OCI-LY7 (cell line): ENCODE measurements at regions of chr5 and their contacts with region 1.

Region 1: DNA sequence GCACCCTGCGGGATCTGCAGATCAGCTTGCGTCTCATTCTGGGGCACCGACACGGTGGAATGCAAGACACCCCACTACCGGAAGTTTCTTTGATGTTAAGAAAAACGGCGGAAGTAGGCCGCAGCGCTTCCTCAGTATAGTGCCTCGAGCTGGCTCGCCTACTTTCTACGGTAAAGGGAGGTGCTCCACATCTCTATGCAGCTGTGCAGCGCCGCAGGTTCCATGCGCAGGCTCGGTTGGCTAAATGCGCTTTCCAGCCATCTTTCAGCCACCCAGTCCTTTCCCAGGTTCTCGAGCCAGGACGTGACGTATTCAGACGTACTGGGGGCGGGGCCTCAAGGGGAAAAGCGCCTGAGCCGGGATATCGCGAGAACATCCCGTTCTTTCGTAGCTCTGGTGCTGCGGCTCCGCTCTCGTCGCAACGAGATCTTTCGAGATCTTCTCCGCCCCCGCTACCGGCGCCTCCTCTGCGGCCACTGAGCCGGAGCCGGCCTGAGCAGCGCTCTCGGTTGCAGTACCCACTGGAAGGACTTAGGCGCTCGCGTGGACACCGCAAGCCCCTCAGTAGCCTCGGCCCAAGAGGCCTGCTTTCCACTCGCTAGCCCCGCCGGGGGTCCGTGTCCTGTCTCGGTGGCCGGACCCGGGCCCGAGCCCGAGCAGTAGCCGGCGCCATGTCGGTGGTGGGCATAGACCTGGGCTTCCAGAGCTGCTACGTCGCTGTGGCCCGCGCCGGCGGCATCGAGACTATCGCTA is at the start of gene HSPA4:
- DNase-seq: peak; percentile 100
- H3K4me3 ChIP-seq: peak within 1 kb of the TSS; percentile 99
- H3K27ac ChIP-seq: peak within 1 kb of the TSS; percentile 97
- H3K4me1 ChIP-seq: peaks cover 38% of the 10 kb centered on the region
- CTCF ChIP-seq: no peak
- total RNA-seq, gene HSPA4: 65.4 and 86.6 TPM in 2 replicates

Region 2: GRCh38 chr5:133025804-133026663 is 25.7 kb before region 1 on chr5 and contains the start of gene ZCCHC10:
- CTCF ChIA-PET with region 1: interaction called, 3 read pairs
- POLR2A ChIA-PET with region 1: interaction called, 70 read pairs
- intact Hi-C with region 1: no loop called
- DNase-seq: peak; percentile 96
- H3K4me3 ChIP-seq: peak within 1 kb of the TSS; percentile 79
- H3K27ac ChIP-seq: peak within 1 kb of the TSS; percentile 69
- H3K4me1 ChIP-seq: peaks cover 36% of the 10 kb centered on the region
- CTCF ChIP-seq: no peak
- total RNA-seq, gene ZCCHC10: 26.9 and 27.2 TPM in 2 replicates

Region 3: DNA sequence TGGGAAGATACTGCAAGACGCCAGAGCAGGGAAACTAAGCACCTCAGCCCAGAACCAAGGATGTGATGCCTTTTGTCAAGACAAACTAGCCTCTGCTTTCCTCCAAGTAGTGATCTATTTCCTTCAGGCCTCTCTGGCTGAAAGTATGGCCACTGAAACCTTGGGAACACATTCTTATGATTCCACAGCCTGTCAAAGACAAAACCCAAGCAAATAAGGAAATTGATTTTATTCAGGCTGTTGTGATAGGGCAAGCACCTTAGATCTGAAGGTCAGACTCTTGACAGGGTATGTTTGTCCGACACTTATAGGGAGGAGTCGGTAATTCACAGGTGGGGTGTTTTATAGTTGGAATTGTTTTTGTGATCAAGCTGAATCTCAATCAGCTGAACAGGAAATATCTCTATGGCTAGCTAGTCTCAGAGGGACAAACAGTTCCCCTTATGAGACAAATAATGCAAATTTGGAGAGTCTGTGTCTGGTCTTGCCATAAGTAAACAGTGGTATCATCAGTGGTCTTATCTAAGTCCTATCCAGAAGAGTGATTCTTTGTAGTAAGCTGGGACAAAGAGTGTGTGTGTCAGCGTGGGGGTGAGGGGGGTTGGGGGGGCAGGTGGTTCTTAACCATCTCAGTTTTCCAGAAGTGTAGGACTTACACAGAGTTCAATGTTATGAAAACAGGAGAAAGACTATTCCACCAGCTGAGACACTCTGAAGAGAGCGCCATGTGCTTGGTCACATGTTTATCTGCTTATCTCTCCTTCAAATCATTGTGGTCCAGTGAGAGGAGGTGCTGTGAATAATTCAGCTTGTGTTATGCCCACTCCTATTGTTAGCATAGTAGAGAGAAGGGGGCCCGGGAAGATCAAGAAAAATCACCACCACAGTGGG is 18.7 kb before region 1 on chr5:
- CTCF ChIA-PET with region 1: interaction called, 4 read pairs
- POLR2A ChIA-PET with region 1: interaction called, 70 read pairs
- intact Hi-C with region 1: loop called (anchors 1 kb)
- DNase-seq: peak; percentile 90
- H3K4me3 ChIP-seq: peak overlapping the region; percentile 44
- H3K27ac ChIP-seq: peak overlapping the region; percentile 97
- H3K4me1 ChIP-seq: peaks cover 72% of the 10 kb centered on the region
- CTCF ChIP-seq: no peak